CD14-positive monocyte (primary cell): ENCODE measurements at regions of chr1 and their contacts with region 1.

Region 1: GRCh38 chr1:206050655-206051235 is 2.2 kb upstream of the RHEX start:
- DNase-seq: peak; percentile 94 to 99 (median 97)
- H3K4me3 ChIP-seq: peak overlapping the region in 1 of 3 experiments; percentile 37
- H3K4me3 Mint-ChIP-seq: peak overlapping the region; percentile 32 to 79
- H3K27ac ChIP-seq: peak overlapping the region; percentile 63 to 77
- H3K27ac Mint-ChIP-seq: peak overlapping the region; percentile 84 to 96 (median 92)
- H3K4me1 ChIP-seq: peaks cover 57 to 58% of the 10 kb centered on the region in 2 donors
- H3K4me1 Mint-ChIP-seq: peaks cover 58% of the 10 kb centered on the region
- H3K27me3 ChIP-seq: no peaks in the 10 kb centered on the region
- H3K27me3 Mint-ChIP-seq: no peaks in the 10 kb centered on the region
- CTCF ChIP-seq: no peak

Region 2: DNA sequence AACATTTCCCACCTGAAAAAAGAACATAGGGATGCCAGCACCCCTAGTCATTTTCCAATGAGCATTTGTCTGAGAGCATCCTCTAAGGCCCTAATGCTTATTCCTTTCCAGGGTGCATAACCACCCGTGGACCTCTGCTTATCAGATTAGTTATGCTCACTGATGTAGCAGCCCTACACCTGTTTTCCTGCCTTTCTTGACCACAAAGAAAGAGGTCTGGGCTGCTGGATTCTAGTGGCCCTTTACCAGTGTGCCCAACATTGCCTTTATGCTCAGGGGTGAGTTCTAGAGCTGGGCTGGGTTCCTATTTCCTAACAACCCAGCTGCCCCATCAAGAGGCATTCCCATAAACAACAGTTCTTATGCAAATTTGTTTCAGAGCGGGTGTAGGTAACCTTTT is 180.5 kb before region 1 on chr1:
- intact Hi-C with region 1: no loop called
- DNase-seq: no peak
- H3K4me3 ChIP-seq: no peak overlapping the region
- H3K4me3 Mint-ChIP-seq: no peak overlapping the region
- H3K27ac ChIP-seq: no peak overlapping the region
- H3K27ac Mint-ChIP-seq: no peak overlapping the region
- H3K4me1 ChIP-seq: no peaks in the 10 kb centered on the region
- H3K4me1 Mint-ChIP-seq: no peaks in the 10 kb centered on the region
- H3K27me3 ChIP-seq: peaks cover 5 to 10% of the 10 kb centered on the region in 2 donors
- H3K27me3 Mint-ChIP-seq: peaks cover 0 to 6% (median 3%) of the 10 kb centered on the region in 3 donors
- CTCF ChIP-seq: no peak

Region 3: GRCh38 chr1:206012086-206012859 is 38.5 kb before region 1 on chr1:
- intact Hi-C with region 1: loop called in 1 of 2 experiments (anchors 5 kb)
- DNase-seq: peak; percentile 83 to 94 (median 90)
- H3K4me3 ChIP-seq: peak overlapping the region; percentile 0 to 71 (median 11)
- H3K4me3 Mint-ChIP-seq: peak overlapping the region; percentile 56 to 80
- H3K27ac ChIP-seq: peak overlapping the region; percentile 44 to 80
- H3K27ac Mint-ChIP-seq: peak overlapping the region; percentile 73 to 92 (median 88)
- H3K4me1 ChIP-seq: peaks cover 31 to 42% of the 10 kb centered on the region in 2 donors
- H3K4me1 Mint-ChIP-seq: peaks cover 43% of the 10 kb centered on the region
- H3K27me3 ChIP-seq: no peaks in the 10 kb centered on the region
- H3K27me3 Mint-ChIP-seq: peaks cover 0 to 2% (median 0%) of the 10 kb centered on the region in 3 donors
- CTCF ChIP-seq: no peak

Region 4: GRCh38 chr1:206035027-206035426 is 15.7 kb before region 1 on chr1:
- intact Hi-C with region 1: no loop called
- DNase-seq: no peak
- H3K4me3 ChIP-seq: peak overlapping the region in 2 of 3 experiments; percentile 16 to 47
- H3K4me3 Mint-ChIP-seq: peak overlapping the region; percentile 75 to 90
- H3K27ac ChIP-seq: no peak overlapping the region
- H3K27ac Mint-ChIP-seq: peak overlapping the region in 2 of 7 donors; percentile 7 to 50
- H3K4me1 ChIP-seq: peaks cover 31 to 39% of the 10 kb centered on the region in 2 donors
- H3K4me1 Mint-ChIP-seq: peaks cover 43% of the 10 kb centered on the region
- H3K27me3 ChIP-seq: no peaks in the 10 kb centered on the region
- H3K27me3 Mint-ChIP-seq: peaks cover 3 to 7% (median 4%) of the 10 kb centered on the region in 3 donors
- CTCF ChIP-seq: no peak